Activated naive CD4-positive, alpha-beta T cell treated with anti-CD3 and anti-CD28 coated beads for 36 hours (primary cell): ENCODE measurements at regions of chr13 and their contacts with region 1.

Region 1: GRCh38 chr13:20197361-20197834 is 4.7 kb upstream of the GJB2 start:
- DNase-seq: peak; percentile 23
- H3K4me3 Mint-ChIP-seq: no peak overlapping the region
- H3K27ac Mint-ChIP-seq: no peak overlapping the region
- H3K4me1 Mint-ChIP-seq: peaks cover 13% of the 10 kb centered on the region
- H3K27me3 Mint-ChIP-seq: peaks cover 37% of the 10 kb centered on the region

Region 2: GRCh38 chr13:19587635-19588300 is 609.6 kb before region 1 on chr13:
- CTCF ChIA-PET with region 1: no interaction called
- intact Hi-C with region 1: no loop called
- DNase-seq: peak; percentile 58
- H3K4me3 Mint-ChIP-seq: peak overlapping the region; percentile 75
- H3K27ac Mint-ChIP-seq: peak overlapping the region; percentile 93
- H3K4me1 Mint-ChIP-seq: peaks cover 17% of the 10 kb centered on the region
- H3K27me3 Mint-ChIP-seq: no peaks in the 10 kb centered on the region

Region 3: GRCh38 chr13:20035130-20035529 is 162.3 kb before region 1 on chr13:
- CTCF ChIA-PET with region 1: no interaction called
- intact Hi-C with region 1: no loop called
- DNase-seq: no peak
- H3K4me3 Mint-ChIP-seq: no peak overlapping the region
- H3K27ac Mint-ChIP-seq: no peak overlapping the region
- H3K4me1 Mint-ChIP-seq: peaks cover 15% of the 10 kb centered on the region
- H3K27me3 Mint-ChIP-seq: no peaks in the 10 kb centered on the region

Region 4: GRCh38 chr13:20297181-20297580 is 99.8 kb after region 1 on chr13:
- CTCF ChIA-PET with region 1: interaction called, 4 read pairs
- intact Hi-C with region 1: loop called (anchors 5 kb)
- DNase-seq: no peak
- H3K4me3 Mint-ChIP-seq: no peak overlapping the region
- H3K27ac Mint-ChIP-seq: no peak overlapping the region
- H3K4me1 Mint-ChIP-seq: peaks cover 4% of the 10 kb centered on the region
- H3K27me3 Mint-ChIP-seq: peaks cover 16% of the 10 kb centered on the region

Region 5: DNA sequence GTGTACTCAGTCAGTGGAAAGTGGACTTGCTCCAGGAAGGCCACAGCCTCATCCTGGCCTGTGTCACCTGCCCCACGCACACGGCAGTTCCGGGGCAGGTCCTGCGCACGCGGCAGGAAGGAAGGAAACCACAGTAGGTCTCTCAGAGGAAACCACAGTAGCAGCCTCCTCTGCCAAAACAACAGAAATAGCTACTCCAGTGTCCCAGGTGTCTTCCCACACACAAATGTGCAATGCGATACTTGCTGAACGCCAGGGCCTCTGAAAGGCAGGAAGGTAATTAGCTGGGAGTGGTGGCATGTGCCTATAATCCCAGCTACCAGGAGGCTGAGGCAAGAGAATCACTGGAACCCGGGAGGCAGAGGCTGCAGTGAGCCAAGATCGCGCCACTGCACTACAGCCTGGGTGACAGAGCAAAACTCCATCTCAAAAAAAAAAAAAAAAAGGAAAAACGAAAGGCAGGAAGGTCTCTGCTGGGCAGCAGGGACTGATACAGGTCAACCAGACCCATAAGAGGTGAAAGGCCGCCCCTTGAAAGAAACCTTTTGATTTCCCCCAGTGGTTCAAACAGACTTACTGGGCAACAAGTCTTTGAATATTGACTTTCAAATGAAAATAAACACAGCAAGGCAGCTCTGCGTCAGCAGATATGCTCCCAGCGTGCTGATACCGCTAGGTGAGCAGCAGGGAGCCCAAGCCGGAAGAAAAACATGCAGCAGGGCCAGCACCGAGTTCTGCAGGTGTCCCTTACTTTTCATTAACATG is 278.7 kb after region 1 on chr13:
- CTCF ChIA-PET with region 1: interaction called, 5 read pairs
- intact Hi-C with region 1: loop called (anchors 2 kb)
- DNase-seq: peak; percentile 82
- H3K4me3 Mint-ChIP-seq: peak overlapping the region; percentile 65
- H3K27ac Mint-ChIP-seq: peak overlapping the region; percentile 92
- H3K4me1 Mint-ChIP-seq: peaks cover 27% of the 10 kb centered on the region
- H3K27me3 Mint-ChIP-seq: no peaks in the 10 kb centered on the region

Region 6: GRCh38 chr13:20495082-20496023 is 298.0 kb after region 1 on chr13:
- CTCF ChIA-PET with region 1: interaction called, 20 read pairs
- intact Hi-C with region 1: no loop called
- DNase-seq: peak; percentile 81
- H3K4me3 Mint-ChIP-seq: no peak overlapping the region
- H3K27ac Mint-ChIP-seq: no peak overlapping the region
- H3K4me1 Mint-ChIP-seq: no peaks in the 10 kb centered on the region
- H3K27me3 Mint-ChIP-seq: no peaks in the 10 kb centered on the region